HEK293 (cell line): ENCODE measurements at regions of chr12 and their contacts with region 1.

Region 1: GRCh38 chr12:98418357-98419075 is 96.9 kb upstream of the TMPO start:
- H3K4me3 ChIP-seq: no peak overlapping the region
- H3K27ac ChIP-seq: no peak overlapping the region
- H3K4me1 ChIP-seq: no peaks in the 10 kb centered on the region
- CTCF ChIP-seq: no peak

Region 2: GRCh38 chr12:98397316-98398105 is 21.0 kb before region 1 on chr12:
- CTCF ChIA-PET with region 1: interaction called, 11 read pairs
- POLR2A ChIA-PET with region 1: no interaction called
- H3K4me3 ChIP-seq: peak overlapping the region; percentile 0
- H3K27ac ChIP-seq: no peak overlapping the region; the same call in 1 of the 2 replicates
- H3K4me1 ChIP-seq: peaks cover 7% of the 10 kb centered on the region
- CTCF ChIP-seq: peak; percentile 87